MCF 10A (cell line): ENCODE measurements at regions of chr1 and their contacts with region 1.

Region 1: DNA sequence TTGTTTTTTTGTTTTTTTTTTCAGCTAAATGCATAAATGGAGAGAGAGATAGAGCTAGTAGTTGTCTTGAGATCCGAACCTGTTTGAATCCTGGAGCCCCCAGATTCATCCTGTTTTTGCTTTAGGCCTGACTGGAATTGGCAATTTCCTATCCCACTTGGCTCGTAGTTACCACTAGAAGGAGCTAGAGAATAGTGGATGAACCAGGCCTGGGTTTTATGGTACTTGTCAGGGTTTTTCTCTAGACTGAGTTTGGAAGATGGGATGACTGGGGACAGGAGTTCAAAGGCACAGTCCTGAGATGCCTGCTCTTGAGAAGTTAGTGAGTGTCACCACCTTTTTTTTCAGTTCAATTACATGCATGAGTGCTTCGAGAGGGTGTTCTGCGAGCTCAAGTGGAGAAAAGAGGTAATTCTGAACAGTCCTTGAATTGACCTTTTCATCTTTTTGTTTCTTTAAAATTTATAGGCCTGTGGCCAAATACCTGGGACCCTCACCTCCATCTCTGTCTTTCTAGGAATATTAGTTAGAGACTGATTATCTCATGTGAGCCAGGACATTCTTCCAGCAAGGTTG is 23.4 kb downstream of the CELF3 start:
- DNase-seq: peak; percentile 60
- H3K4me3 Mint-ChIP-seq: no peak overlapping the region
- H3K27ac Mint-ChIP-seq: peak overlapping the region; percentile 43
- H3K4me1 Mint-ChIP-seq: no peaks in the 10 kb centered on the region
- H3K27me3 Mint-ChIP-seq: no peaks in the 10 kb centered on the region
- CTCF ChIP-seq: peak; percentile 74

Region 2: DNA sequence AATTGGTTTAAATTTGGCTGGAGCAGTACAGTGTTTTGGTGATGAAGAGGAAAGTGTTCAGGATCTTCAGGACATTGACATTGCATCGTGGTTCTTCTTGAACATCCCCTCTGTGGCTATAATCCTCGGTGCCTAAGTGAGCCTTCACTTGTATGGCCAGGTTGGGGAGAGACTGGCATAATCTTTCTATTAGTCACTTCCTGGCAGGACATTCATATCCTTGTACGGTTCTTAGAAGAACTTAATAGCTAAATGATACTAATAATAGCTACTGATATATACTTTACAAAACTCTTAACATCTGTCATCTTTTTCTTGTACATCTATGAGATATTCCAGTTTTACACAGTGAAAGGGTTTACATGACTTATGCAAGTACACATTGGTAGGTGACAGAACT is 12.4 kb before region 1 on chr1:
- CTCF ChIA-PET with region 1: interaction called, 14 read pairs
- POLR2A ChIA-PET with region 1: interaction called, 3 read pairs
- intact Hi-C with region 1: no loop called
- DNase-seq: peak; percentile 80
- H3K4me3 Mint-ChIP-seq: no peak overlapping the region
- H3K27ac Mint-ChIP-seq: peak overlapping the region; percentile 73
- H3K4me1 Mint-ChIP-seq: peaks cover 18% of the 10 kb centered on the region
- H3K27me3 Mint-ChIP-seq: no peaks in the 10 kb centered on the region
- CTCF ChIP-seq: no peak

Region 3: DNA sequence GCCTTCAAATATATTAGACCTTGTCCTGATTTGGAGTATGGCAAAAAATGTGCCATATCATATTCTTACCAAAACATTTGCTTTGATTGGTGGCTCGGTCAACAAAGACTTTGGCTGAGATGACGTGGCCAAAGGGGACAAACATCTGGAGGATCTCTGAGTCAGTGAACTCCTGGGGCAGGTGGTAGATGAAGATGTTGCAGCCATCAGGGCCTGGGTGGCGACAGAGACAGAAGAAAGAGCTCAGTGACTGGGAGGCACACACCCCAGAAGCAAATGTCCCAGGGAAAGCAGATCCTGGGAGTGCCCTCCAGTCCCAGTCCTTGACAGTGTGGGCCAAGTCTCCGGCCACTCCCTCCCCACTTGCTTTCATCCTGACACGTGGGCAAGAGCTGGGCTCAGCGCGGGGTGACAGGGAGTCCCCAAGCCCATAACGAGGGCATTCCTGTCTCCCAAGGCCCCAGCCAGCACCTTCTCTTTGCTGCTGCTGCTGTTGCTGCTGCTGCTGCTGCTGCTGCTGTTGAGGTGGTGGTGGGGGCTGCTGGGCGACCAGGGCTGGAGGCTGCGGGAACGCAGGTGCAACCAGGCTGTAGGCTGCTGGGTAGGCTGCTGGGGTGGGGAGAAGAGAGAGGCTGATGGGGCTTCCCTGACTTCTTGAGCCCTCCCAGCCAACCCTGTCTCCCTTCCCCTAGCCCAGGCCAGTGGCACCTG is 12.7 kb after region 1 on chr1:
- CTCF ChIA-PET with region 1: interaction called, 10 read pairs
- POLR2A ChIA-PET with region 1: no interaction called
- intact Hi-C with region 1: no loop called
- DNase-seq: peak; percentile 27
- H3K4me3 Mint-ChIP-seq: no peak overlapping the region
- H3K27ac Mint-ChIP-seq: no peak overlapping the region
- H3K4me1 Mint-ChIP-seq: peaks cover 6% of the 10 kb centered on the region
- H3K27me3 Mint-ChIP-seq: no peaks in the 10 kb centered on the region
- CTCF ChIP-seq: no peak

Region 4: DNA sequence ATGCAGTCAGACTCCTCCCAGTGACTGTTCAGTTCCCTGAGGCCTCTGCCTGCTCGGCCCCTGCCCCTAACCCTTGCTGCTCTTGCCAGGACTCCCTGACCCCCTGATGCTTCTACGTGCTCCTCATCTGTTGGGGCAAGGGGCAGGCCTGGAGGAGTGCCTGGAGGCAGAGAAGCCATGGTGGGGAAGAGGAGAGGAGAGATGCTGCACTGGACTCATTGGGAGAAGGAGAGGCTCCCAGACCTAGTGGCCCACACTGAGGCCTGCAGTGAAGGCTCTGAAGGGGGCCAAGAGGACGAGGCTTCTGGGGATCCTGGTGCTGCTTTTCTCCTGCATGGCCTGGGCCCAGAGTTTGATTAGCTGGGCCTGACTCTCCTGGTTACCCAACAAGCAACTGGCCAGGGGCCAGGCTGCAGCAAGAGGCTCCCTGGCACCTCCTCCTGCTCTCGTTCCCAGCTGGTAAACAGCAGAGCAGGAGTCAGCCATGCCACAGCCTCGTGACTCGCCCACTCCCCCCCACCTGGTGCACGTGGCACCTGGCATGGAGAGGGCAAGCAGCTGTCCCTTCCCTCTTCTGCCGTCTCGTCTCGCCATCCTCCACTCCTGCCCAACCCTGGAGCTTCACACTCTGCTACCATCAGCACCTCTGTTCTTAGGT is 139.3 kb after region 1 on chr1:
- CTCF ChIA-PET with region 1: interaction called, 15 read pairs
- POLR2A ChIA-PET with region 1: no interaction called
- intact Hi-C with region 1: loop called (anchors 1 kb)
- DNase-seq: peak; percentile 95
- H3K4me3 Mint-ChIP-seq: peak overlapping the region; percentile 56
- H3K27ac Mint-ChIP-seq: peak overlapping the region; percentile 60
- H3K4me1 Mint-ChIP-seq: peaks cover 67% of the 10 kb centered on the region
- H3K27me3 Mint-ChIP-seq: no peaks in the 10 kb centered on the region
- CTCF ChIP-seq: no peak